ENCODE measurements at regions of chr3 and their contacts with region 1.

Region 1: DNA sequence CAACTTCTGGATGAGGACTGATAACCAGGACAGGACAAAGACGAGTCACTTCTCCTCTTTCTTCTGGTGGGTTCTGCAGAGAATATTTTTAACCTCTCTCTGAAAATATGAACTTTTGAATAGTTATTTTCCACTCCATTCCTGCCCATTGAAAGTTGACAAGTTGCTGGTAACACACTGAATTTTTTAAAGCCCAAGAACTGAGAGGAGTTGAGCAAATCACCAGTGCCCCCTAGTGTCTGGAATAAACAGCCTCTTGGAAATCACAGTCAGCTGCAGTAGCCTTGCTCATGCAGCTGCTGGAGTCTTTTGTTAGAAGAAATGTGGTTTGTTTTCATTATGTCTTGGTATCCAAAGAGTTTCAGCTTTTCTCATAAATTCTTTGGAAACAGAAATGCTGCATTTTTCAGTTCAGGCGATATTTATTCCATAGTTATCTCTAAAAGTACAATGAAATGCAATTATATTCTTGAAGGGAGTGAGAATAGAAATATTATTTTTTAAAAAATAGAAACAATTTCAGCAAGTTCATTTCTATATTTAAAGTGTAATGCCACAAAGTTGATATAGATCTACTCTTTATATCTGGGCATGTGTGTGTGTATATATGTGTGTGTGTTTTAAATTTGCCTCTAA is 741.0 kb upstream of the CBLB start:
- DNase-seq: peak; percentile 69
- H3K4me3 ChIP-seq: no peak overlapping the region
- H3K27ac ChIP-seq: no peak overlapping the region
- H3K4me1 ChIP-seq: no peaks in the 10 kb centered on the region
- H3K27me3 ChIP-seq: no peaks in the 10 kb centered on the region
- CTCF ChIP-seq: peak; percentile 74 to 82 (median 78)
- POLR2A ChIP-seq: no peak

Region 2: GRCh38 chr3:105686278-105686897 is 923.4 kb before region 1 on chr3:
- intact Hi-C with region 1: loop called (anchors 5 kb)
- DNase-seq: no peak
- H3K4me3 ChIP-seq: no peak overlapping the region
- H3K27ac ChIP-seq: no peak overlapping the region
- H3K4me1 ChIP-seq: no peaks in the 10 kb centered on the region
- H3K27me3 ChIP-seq: no peaks in the 10 kb centered on the region
- CTCF ChIP-seq: peak; percentile 32 to 54 (median 38)
- POLR2A ChIP-seq: no peak

Region 3: DNA sequence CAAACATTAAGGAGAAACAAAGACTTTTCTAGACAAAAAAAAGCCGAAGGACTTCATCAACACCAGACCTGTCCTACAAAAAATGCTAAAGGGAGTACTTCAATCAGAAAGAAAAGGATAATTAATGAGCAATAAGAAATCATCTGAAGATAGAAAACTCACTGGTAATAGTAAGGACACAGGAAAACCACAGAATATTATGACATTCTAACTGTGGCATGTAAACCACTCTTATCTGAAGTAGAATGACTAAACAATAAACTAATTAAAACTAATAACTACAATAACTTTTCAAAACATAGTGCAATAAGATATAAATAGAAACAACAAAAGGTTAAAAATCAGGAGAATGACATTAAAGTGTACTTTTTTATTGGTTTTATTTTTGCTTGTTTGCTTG is 182.9 kb after region 1 on chr3:
- intact Hi-C with region 1: no loop called
- DNase-seq: no peak
- H3K4me3 ChIP-seq: no peak overlapping the region
- H3K27ac ChIP-seq: no peak overlapping the region
- H3K4me1 ChIP-seq: no peaks in the 10 kb centered on the region
- H3K27me3 ChIP-seq: no peaks in the 10 kb centered on the region
- CTCF ChIP-seq: no peak
- POLR2A ChIP-seq: no peak

Measured in prostate gland (tissue), 2 donors.